ENCODE measurements at regions of chr5 and their contacts with region 1.

Region 1: GRCh38 chr5:39283231-39283818 is 64.0 kb upstream of the FYB1 start:
- DNase-seq: peak in 8 of 9 experiments; percentile 40 to 90 (median 64)
- ATAC-seq: peak; percentile 100
- H3K4me3 ChIP-seq: no peak overlapping the region
- H3K4me3 Mint-ChIP-seq: no peak overlapping the region
- H3K27ac ChIP-seq: no peak overlapping the region
- H3K27ac Mint-ChIP-seq: peak overlapping the region; percentile 73
- H3K4me1 ChIP-seq: peaks cover 8% of the 10 kb centered on the region
- H3K4me1 Mint-ChIP-seq: peaks cover 30% of the 10 kb centered on the region
- H3K27me3 ChIP-seq: no peaks in the 10 kb centered on the region
- H3K27me3 Mint-ChIP-seq: peaks cover 3% of the 10 kb centered on the region
- CTCF ChIP-seq: peak; percentile 82

Region 2: DNA sequence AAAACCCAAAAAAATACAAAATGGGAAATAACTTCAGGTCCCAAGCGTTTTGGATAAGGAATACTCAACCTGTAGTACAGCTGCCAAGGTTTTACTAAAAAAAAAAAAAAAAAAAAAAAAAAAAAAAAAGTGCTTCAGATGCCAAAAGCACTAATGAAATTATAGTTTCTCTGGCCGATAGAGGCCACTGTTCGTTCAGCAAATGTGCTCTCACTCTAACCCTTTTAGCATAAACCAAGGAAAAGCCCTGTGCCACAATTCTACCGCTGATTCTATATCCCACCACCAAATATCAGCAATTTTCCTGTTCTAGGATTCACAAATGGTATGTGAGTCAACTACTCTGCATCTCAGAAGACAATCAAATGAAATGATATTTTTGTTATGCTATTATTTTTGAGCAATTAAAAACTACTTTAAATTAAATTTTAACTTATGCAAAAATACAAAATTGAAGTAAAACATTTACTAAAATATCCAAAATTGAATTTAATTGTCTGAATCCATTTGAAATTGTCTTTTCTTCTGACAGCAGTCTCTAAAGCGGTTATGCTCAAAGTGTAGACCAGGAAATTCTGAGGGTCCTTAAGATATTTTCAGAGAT is 288.9 kb before region 1 on chr5:
- CTCF ChIA-PET with region 1: interaction called, 3 read pairs
- POLR2A ChIA-PET with region 1: no interaction called
- intact Hi-C with region 1: loop called (anchors 2 to 10 kb)
- DNase-seq: peak in 5 of 9 experiments; percentile 15 to 76 (median 41)
- ATAC-seq: peak; percentile 74
- H3K4me3 ChIP-seq: no peak overlapping the region
- H3K4me3 Mint-ChIP-seq: no peak overlapping the region
- H3K27ac ChIP-seq: no peak overlapping the region
- H3K27ac Mint-ChIP-seq: no peak overlapping the region
- H3K4me1 ChIP-seq: no peaks in the 10 kb centered on the region
- H3K4me1 Mint-ChIP-seq: peaks cover 27% of the 10 kb centered on the region
- H3K27me3 ChIP-seq: no peaks in the 10 kb centered on the region
- H3K27me3 Mint-ChIP-seq: no peaks in the 10 kb centered on the region
- CTCF ChIP-seq: peak; percentile 39

Region 3: DNA sequence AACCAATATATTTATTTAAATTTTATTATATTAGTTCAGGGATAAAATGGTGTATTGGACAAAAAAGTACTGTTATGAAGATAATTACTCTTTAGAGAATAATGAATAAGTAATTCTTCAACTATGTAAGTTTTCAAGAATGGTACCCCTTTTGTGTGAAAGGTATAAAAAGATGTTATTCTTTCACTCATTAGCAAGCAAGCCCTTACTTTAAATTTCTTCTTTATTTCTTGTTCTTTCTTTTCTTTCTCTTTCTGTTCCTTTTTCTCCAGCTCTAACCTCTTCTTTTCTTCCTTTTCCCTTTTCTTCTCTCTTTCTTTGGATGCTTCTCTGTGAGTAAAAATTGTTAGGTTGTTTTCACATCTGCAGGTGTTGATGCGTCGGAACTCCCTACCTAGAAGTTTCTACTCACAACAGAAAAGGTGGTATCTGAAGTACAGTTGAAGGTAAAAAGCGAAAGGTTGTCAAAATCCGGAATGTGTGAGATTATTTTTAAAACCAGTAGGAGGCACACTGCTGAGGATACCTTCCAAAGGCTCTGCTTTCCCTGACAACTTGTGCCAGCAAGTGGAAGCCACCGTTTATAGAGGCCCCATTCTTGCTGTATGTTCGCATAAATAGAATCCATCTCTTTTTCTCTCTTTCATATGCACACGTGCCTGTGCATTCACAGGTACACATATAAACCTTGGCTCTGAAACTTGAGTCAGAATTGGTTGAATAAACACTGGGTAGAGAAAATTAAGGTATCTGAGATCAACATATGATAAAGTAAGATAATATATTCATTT is 145.7 kb before region 1 on chr5:
- CTCF ChIA-PET with region 1: interaction called, 10 read pairs
- POLR2A ChIA-PET with region 1: no interaction called
- intact Hi-C with region 1: no loop called
- DNase-seq: peak in 2 of 9 experiments; percentile 15 to 39
- ATAC-seq: peak; percentile 34
- H3K4me3 ChIP-seq: no peak overlapping the region
- H3K4me3 Mint-ChIP-seq: no peak overlapping the region
- H3K27ac ChIP-seq: peak overlapping the region in 1 of 2 experiments; percentile 0
- H3K27ac Mint-ChIP-seq: peak overlapping the region; percentile 82
- H3K4me1 ChIP-seq: peaks cover 5% of the 10 kb centered on the region
- H3K4me1 Mint-ChIP-seq: peaks cover 37% of the 10 kb centered on the region
- H3K27me3 ChIP-seq: no peaks in the 10 kb centered on the region
- H3K27me3 Mint-ChIP-seq: no peaks in the 10 kb centered on the region
- CTCF ChIP-seq: no peak

Region 4: DNA sequence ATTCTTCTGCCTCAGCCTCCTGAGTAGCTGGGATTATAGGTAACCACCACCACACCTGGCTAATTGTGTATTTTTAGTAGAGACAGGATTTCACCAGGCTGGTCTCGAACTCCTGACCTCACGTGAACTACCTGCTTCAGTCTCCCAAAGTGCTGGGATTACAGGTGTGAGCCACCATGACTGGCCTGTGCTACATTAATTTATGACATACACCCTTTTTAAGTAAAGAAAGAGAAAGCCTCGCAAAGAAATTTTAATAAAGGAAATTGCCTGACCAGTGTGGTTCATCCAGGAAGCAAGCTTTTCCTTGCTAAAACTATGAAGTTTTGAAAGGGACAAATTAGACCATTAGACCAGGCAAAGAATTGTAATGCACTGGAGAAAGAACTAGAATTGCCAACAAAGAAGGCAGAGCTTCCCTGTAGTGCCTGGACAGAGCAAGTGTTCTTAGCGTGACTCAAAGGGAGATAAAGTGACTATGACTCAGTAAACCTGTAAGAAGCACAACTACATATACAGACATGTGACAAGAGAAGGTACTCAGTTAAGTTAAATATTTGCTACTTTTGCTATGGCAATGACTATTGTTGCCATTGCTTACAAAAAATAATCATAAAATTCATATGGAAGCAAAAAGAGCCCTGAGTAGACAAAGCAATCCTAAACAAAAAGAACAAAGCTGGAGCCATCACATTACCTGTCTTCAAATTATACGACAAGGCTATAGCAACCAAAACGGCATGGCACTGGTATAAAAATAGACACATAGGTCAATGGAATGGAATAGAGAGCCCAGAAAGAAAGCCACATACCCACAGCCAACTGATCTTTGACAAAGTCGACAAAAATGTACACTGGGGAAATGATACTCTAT is 118.6 kb before region 1 on chr5:
- CTCF ChIA-PET with region 1: interaction called, 21 read pairs
- POLR2A ChIA-PET with region 1: no interaction called
- intact Hi-C with region 1: no loop called
- DNase-seq: peak in 2 of 9 experiments; percentile 56 to 70
- ATAC-seq: peak; percentile 73
- H3K4me3 ChIP-seq: no peak overlapping the region
- H3K4me3 Mint-ChIP-seq: peak overlapping the region; percentile 55
- H3K27ac ChIP-seq: peak overlapping the region; percentile 9 to 65
- H3K27ac Mint-ChIP-seq: peak overlapping the region; percentile 91
- H3K4me1 ChIP-seq: peaks cover 93% of the 10 kb centered on the region
- H3K4me1 Mint-ChIP-seq: peaks cover 90% of the 10 kb centered on the region
- H3K27me3 ChIP-seq: no peaks in the 10 kb centered on the region
- H3K27me3 Mint-ChIP-seq: no peaks in the 10 kb centered on the region
- CTCF ChIP-seq: no peak

Region 5: DNA sequence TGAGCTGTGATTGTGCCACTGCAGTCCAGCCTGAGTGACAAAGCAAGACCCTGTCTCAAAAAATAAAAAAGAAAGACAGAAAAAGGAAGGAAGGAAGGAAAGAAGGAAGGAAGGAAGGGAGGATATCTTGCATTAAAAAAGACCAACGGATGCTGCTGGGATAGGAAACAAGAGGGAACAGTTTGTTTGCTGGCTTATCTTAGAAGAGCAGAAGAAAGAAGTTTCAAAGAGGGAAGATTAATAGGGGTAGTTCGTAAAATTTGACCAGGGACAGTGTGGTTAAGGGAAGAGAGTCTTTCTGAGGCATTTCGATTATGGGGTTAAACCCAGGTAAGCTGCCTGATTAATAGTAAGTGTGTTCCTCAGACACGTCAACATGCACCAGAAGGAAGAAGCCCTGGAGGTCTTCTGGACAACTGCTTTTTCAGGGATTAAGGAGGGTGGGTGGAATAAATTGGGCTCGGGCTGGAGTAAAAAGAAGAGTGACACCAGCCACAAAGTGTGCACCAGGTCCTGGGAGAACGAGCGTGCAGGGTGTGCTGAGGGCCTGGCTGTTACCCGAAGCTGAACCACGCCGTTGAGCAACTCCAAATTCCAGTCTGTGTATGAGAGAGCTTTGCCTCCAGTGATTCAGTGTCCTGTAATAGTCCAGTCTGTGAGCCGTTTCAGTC is 88.7 kb before region 1 on chr5:
- CTCF ChIA-PET with region 1: interaction called, 64 read pairs
- POLR2A ChIA-PET with region 1: interaction called, 3 read pairs
- intact Hi-C with region 1: no loop called
- DNase-seq: peak in 1 of 9 experiments; percentile 41
- ATAC-seq: no peak
- H3K4me3 ChIP-seq: peak overlapping the region; percentile 12 to 28
- H3K4me3 Mint-ChIP-seq: peak overlapping the region; percentile 77
- H3K27ac ChIP-seq: peak overlapping the region; percentile 41 to 88
- H3K27ac Mint-ChIP-seq: peak overlapping the region; percentile 94
- H3K4me1 ChIP-seq: peaks cover 72% of the 10 kb centered on the region
- H3K4me1 Mint-ChIP-seq: peaks cover 76% of the 10 kb centered on the region
- H3K27me3 ChIP-seq: no peaks in the 10 kb centered on the region
- H3K27me3 Mint-ChIP-seq: no peaks in the 10 kb centered on the region
- CTCF ChIP-seq: no peak

Region 6: GRCh38 chr5:39217365-39218281 is 65.7 kb before region 1 on chr5:
- CTCF ChIA-PET with region 1: interaction called, 212 read pairs
- POLR2A ChIA-PET with region 1: interaction called, 16 read pairs
- intact Hi-C with region 1: loop called (anchors 1 kb)
- DNase-seq: peak; percentile 56 to 92 (median 81)
- ATAC-seq: peak; percentile 61
- H3K4me3 ChIP-seq: peak overlapping the region; percentile 41 to 59
- H3K4me3 Mint-ChIP-seq: peak overlapping the region; percentile 79
- H3K27ac ChIP-seq: peak overlapping the region; percentile 53 to 70
- H3K27ac Mint-ChIP-seq: peak overlapping the region; percentile 92
- H3K4me1 ChIP-seq: peaks cover 47% of the 10 kb centered on the region
- H3K4me1 Mint-ChIP-seq: peaks cover 74% of the 10 kb centered on the region
- H3K27me3 ChIP-seq: no peaks in the 10 kb centered on the region
- H3K27me3 Mint-ChIP-seq: no peaks in the 10 kb centered on the region
- CTCF ChIP-seq: peak; percentile 96

Region 7: DNA sequence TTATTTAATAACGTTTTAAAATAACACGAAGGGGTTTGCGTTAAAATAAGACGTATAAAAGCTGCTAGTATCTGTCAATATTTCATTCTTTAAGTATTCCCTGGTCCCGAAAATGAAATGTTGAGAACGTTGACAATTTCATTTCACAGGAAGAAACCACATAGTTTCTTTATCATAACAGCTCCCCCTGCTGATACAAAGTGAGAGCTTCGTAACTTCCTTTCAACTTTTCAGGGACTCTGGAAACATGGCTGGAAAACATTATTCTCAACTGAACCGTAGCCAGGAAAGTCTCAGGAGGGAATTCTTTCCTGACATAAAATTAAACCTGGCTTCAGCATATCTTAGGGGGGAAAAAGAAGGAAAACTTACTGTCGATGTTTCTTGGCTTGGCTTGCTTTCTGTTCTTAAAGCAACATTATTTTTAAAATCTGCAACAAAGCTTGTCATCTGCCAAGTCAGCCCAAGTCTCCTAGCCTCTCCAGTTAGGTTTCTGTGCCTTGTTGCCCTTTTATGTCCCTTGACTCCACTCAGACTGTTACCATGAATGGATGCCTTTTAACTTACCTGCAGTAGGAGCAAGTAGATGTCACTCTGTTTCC is 264.3 kb after region 1 on chr5:
- CTCF ChIA-PET with region 1: interaction called, 3 read pairs
- POLR2A ChIA-PET with region 1: no interaction called
- intact Hi-C with region 1: loop called in 1 of 2 experiments (anchors 5 kb)
- DNase-seq: peak in 3 of 9 experiments; percentile 11 to 64 (median 45)
- ATAC-seq: peak; percentile 46
- H3K4me3 ChIP-seq: no peak overlapping the region
- H3K4me3 Mint-ChIP-seq: peak overlapping the region; percentile 43
- H3K27ac ChIP-seq: no peak overlapping the region
- H3K27ac Mint-ChIP-seq: no peak overlapping the region
- H3K4me1 ChIP-seq: no peaks in the 10 kb centered on the region
- H3K4me1 Mint-ChIP-seq: peaks cover 6% of the 10 kb centered on the region
- H3K27me3 ChIP-seq: no peaks in the 10 kb centered on the region
- H3K27me3 Mint-ChIP-seq: no peaks in the 10 kb centered on the region
- CTCF ChIP-seq: peak; percentile 72

Measured in CD8-positive, alpha-beta T cell (primary cell).